ENCODE measurements at regions of chr7 and their contacts with region 1.

Region 1: GRCh38 chr7:151818674-151819537 is 58.0 kb downstream of the PRKAG2 start:
- DNase-seq: peak; percentile 93
- H3K4me3 ChIP-seq: no peak overlapping the region
- H3K27ac ChIP-seq: no peak overlapping the region
- H3K4me1 ChIP-seq: peaks cover 24% of the 10 kb centered on the region
- H3K27me3 ChIP-seq: no peaks in the 10 kb centered on the region
- CTCF ChIP-seq: no peak

Region 2: GRCh38 chr7:151851145-151851751 is 32.3 kb after region 1 on chr7:
- CTCF ChIA-PET with region 1: interaction called, 3 read pairs
- POLR2A ChIA-PET with region 1: no interaction called
- intact Hi-C with region 1: loop called (anchors 1 kb)
- DNase-seq: peak; percentile 77 to 89
- H3K4me3 ChIP-seq: peak overlapping the region; percentile 38; the same call in 1 of the 2 replicates
- H3K27ac ChIP-seq: peak overlapping the region; percentile 30
- H3K4me1 ChIP-seq: peaks cover 17% of the 10 kb centered on the region
- H3K27me3 ChIP-seq: peaks cover 2% of the 10 kb centered on the region; the same call in 1 of the 2 replicates
- CTCF ChIP-seq: no peak

Measured in PC-9 (cell line).